Activated T-helper 1 cell treated with anti-CD3 and anti-CD28 coated beads, Interleukin-12 subunit alpha, Interleukin-12 subunit beta, Interleukin-2, Interleukin-4 antibody, amounts not matched to agents 30 ng/mL and 10 ng/mL and 1 ng/mL, durations not matched to agents 14 hours and 24 hours and 36 hours (primary cell): ENCODE measurements at regions of chr2 and their contacts with region 1.

Region 1: DNA sequence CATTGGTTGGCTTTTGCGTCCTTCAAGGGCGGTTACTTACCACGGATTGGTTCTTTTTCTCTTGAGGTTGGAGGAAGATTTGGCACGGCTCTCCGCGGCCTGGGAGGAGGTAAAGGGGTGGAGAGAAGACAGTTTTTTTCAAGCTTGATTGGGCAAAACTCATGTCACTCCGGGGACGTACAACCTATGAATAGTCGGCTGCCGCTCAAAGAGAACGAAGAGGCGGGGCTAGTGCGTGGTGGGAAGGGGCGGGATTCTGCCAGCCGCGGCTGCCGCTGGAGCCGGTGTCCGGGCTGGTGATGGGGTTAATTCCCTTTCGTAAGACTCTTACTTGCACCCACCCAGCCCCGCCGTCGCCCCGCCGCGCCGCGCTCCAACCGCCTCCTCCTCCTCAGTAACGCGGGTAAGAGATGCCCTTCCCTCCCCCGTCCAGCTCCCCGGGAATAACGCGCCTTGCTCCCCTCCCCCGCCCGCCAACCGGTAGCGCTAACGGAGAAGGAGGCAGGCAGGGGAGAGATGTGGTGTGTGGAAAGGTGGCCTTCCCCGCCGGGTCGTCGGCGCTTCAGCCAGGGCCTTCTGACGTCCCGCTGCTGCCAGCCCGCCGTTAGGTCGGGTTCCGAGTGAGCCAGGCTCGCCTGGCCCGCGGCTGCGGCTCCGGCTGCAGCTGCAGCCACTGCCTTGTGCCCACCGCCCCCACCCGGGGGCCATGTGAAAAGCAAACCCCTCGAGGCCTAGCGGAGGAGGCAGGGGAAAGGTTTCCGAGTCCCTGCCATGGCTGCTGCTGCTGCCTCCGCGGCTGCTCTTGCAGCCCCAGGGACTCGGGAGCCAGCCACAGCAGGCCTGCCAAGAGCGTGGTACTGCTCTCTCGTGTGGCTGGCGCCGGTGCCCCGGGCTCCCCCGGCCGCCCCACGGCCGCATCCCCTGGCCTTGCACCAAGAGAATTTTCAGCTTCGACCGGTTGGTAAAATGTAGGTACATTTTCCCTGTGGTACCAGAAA is at the start of gene R3HDM1:
- DNase-seq: peak; percentile 95
- H3K4me3 Mint-ChIP-seq: no peak within 1 kb of the TSS
- H3K27ac Mint-ChIP-seq: peak within 1 kb of the TSS; percentile 83
- H3K4me1 Mint-ChIP-seq: peaks cover 17% of the 10 kb centered on the region
- H3K27me3 Mint-ChIP-seq: no peaks in the 10 kb centered on the region
- total RNA-seq, gene R3HDM1: 63.0 and 64.0 TPM in 2 replicates

Region 2: GRCh38 chr2:135004005-135004746 is 527.4 kb before region 1 on chr2:
- intact Hi-C with region 1: loop called (anchors 2 kb)
- DNase-seq: peak; percentile 47
- H3K4me3 Mint-ChIP-seq: no peak overlapping the region
- H3K27ac Mint-ChIP-seq: no peak overlapping the region
- H3K4me1 Mint-ChIP-seq: peaks cover 7% of the 10 kb centered on the region
- H3K27me3 Mint-ChIP-seq: peaks cover 13% of the 10 kb centered on the region

Region 3: DNA sequence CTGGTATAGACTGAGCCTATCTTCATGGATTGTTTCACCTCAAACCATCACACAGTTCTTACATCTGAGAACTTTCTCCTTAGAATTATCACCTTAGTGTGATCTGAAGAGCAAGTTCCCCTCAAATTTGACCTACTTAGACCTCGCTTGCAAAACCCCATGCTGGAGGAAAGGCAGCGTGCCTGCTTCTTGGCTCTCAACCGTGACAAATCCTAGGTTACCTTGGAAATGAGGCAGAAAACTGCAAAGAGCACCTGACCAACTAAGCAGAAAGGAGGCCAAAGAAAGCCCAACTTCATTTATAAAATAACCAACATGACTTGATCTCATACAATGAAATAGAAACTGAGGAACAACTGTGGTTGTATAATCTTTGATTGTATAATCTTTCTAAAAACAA is 333.0 kb before region 1 on chr2:
- intact Hi-C with region 1: no loop called
- DNase-seq: no peak
- H3K4me3 Mint-ChIP-seq: no peak overlapping the region
- H3K27ac Mint-ChIP-seq: no peak overlapping the region
- H3K4me1 Mint-ChIP-seq: no peaks in the 10 kb centered on the region
- H3K27me3 Mint-ChIP-seq: no peaks in the 10 kb centered on the region

Region 4: GRCh38 chr2:135709992-135710391 is 178.5 kb after region 1 on chr2:
- intact Hi-C with region 1: loop called (anchors 1 kb)
- DNase-seq: peak; percentile 42
- H3K4me3 Mint-ChIP-seq: no peak overlapping the region
- H3K27ac Mint-ChIP-seq: no peak overlapping the region
- H3K4me1 Mint-ChIP-seq: no peaks in the 10 kb centered on the region
- H3K27me3 Mint-ChIP-seq: no peaks in the 10 kb centered on the region

Region 5: DNA sequence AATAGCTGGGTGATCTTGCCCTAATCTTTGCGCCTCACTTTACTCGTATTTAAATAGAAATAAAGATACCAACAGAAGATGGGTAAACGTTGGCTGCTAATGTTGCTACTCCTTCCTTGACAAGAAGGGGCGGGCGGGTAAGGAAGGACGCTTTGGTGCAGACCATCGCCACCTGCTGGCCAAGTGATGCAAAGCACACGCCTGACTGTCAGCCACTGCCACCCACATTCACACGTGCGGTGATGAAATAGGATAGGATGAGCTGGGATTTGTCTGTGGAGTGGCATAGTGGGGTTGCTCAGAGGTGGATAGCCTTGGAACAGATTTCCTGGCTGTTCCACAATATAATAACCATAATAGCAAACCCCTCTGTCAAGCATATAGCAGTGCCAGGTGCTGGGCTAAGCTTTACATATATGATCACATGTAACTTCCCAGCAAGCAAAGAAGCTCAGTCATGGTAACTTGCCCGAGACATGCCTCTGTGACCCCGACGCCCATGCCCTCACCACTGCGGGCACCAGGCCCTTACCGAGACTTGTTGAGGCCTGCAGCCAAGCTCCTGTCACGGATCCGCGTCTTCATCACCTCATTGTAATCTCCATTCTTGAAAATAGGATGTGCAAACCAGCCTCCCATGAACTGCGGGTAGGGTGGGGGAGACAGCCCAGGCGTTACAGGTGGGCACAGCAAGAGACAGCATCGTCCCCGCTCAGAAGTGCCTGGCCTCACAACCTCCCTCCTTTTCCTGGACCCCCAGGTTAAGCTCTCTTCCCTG is 266.2 kb after region 1 on chr2:
- intact Hi-C with region 1: loop called (anchors 5 kb)
- DNase-seq: peak; percentile 62
- H3K4me3 Mint-ChIP-seq: no peak overlapping the region
- H3K27ac Mint-ChIP-seq: peak overlapping the region; percentile 75
- H3K4me1 Mint-ChIP-seq: peaks cover 39% of the 10 kb centered on the region
- H3K27me3 Mint-ChIP-seq: no peaks in the 10 kb centered on the region

Region 6: GRCh38 chr2:135876066-135876711 is 344.7 kb after region 1 on chr2 and contains the start of gene MCM6:
- intact Hi-C with region 1: loop called (anchors 1 kb)
- DNase-seq: peak; percentile 99
- H3K4me3 Mint-ChIP-seq: peak within 1 kb of the TSS; percentile 98
- H3K27ac Mint-ChIP-seq: peak within 1 kb of the TSS; percentile 99
- H3K4me1 Mint-ChIP-seq: peaks cover 45% of the 10 kb centered on the region
- H3K27me3 Mint-ChIP-seq: peaks cover 2% of the 10 kb centered on the region
- total RNA-seq, gene MCM6: 176 and 177 TPM in 2 replicates